CD8-positive, alpha-beta T cell (primary cell): ENCODE measurements at regions of chr14 and their contacts with region 1.

Region 1: GRCh38 chr14:30610787-30611343 is 11.3 kb upstream of the SCFD1 start:
- DNase-seq: peak in 5 of 9 experiments; percentile 18 to 47 (median 27)
- ATAC-seq: no peak
- H3K4me3 ChIP-seq: no peak overlapping the region
- H3K4me3 Mint-ChIP-seq: no peak overlapping the region
- H3K27ac ChIP-seq: no peak overlapping the region
- H3K27ac Mint-ChIP-seq: no peak overlapping the region
- H3K4me1 ChIP-seq: no peaks in the 10 kb centered on the region
- H3K4me1 Mint-ChIP-seq: no peaks in the 10 kb centered on the region
- H3K27me3 ChIP-seq: no peaks in the 10 kb centered on the region
- H3K27me3 Mint-ChIP-seq: no peaks in the 10 kb centered on the region
- CTCF ChIP-seq: no peak

Region 2: GRCh38 chr14:30564868-30565248 is 46.0 kb before region 1 on chr14:
- CTCF ChIA-PET with region 1: no interaction called
- POLR2A ChIA-PET with region 1: no interaction called
- intact Hi-C with region 1: loop called in 1 of 2 experiments (anchors 2 kb)
- DNase-seq: no peak
- ATAC-seq: no peak
- H3K4me3 ChIP-seq: no peak overlapping the region
- H3K4me3 Mint-ChIP-seq: no peak overlapping the region
- H3K27ac ChIP-seq: no peak overlapping the region
- H3K27ac Mint-ChIP-seq: no peak overlapping the region
- H3K4me1 ChIP-seq: peaks cover 39% of the 10 kb centered on the region
- H3K4me1 Mint-ChIP-seq: peaks cover 75% of the 10 kb centered on the region
- H3K27me3 ChIP-seq: no peaks in the 10 kb centered on the region
- H3K27me3 Mint-ChIP-seq: no peaks in the 10 kb centered on the region
- CTCF ChIP-seq: no peak

Region 3: DNA sequence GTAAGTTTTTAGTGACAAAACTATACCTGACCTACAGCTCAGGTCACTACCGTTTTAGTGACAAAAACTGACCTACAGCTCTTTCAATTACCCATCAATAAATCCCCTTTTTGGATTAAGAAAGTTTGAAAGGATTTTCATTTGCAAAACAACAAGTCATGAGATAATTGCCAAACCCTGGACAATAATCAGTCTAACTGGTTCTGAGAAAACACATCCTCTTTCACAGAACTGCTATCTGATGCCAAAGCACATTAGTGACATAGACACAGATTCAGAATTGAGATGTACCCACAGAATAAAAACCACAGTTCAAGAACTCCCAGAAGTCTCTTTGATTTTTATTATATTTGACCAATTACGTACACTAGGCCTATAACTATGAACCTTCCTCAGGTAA is 137.5 kb after region 1 on chr14:
- CTCF ChIA-PET with region 1: no interaction called
- POLR2A ChIA-PET with region 1: no interaction called
- intact Hi-C with region 1: no loop called
- DNase-seq: no peak
- ATAC-seq: no peak
- H3K4me3 ChIP-seq: no peak overlapping the region
- H3K4me3 Mint-ChIP-seq: no peak overlapping the region
- H3K27ac ChIP-seq: no peak overlapping the region
- H3K27ac Mint-ChIP-seq: no peak overlapping the region
- H3K4me1 ChIP-seq: no peaks in the 10 kb centered on the region
- H3K4me1 Mint-ChIP-seq: no peaks in the 10 kb centered on the region
- H3K27me3 ChIP-seq: no peaks in the 10 kb centered on the region
- H3K27me3 Mint-ChIP-seq: peaks cover 6% of the 10 kb centered on the region
- CTCF ChIP-seq: no peak